ENCODE measurements at regions of chr6 and their contacts with region 1.

Region 1: GRCh38 chr6:30742316-30743098 is at the start of gene FLOT1:
- DNase-seq: peak in 1 of 2 donors; percentile 98
- H3K4me3 ChIP-seq: peak within 1 kb of the TSS; percentile 65 to 89
- H3K27ac ChIP-seq: peak within 1 kb of the TSS; percentile 95
- H3K4me1 ChIP-seq: peaks cover 57% of the 10 kb centered on the region
- H3K27me3 ChIP-seq: no peaks in the 10 kb centered on the region
- CTCF ChIP-seq: no peak
- POLR2A ChIP-seq: peak in 1 of 2 donors; percentile 61
- total RNA-seq, gene FLOT1: 165 TPM

Region 2: GRCh38 chr6:29016559-29017427 is 1725.7 kb before region 1 on chr6:
- intact Hi-C with region 1: no loop called
- DNase-seq: no peak
- H3K4me3 ChIP-seq: peak overlapping the region; percentile 50 to 63
- H3K27ac ChIP-seq: peak overlapping the region; percentile 57
- H3K4me1 ChIP-seq: peaks cover 9% of the 10 kb centered on the region
- H3K27me3 ChIP-seq: no peaks in the 10 kb centered on the region
- CTCF ChIP-seq: peak; percentile 72 to 89 (median 86)
- POLR2A ChIP-seq: no peak

Region 3: GRCh38 chr6:30781743-30782424 is 39.4 kb after region 1 on chr6:
- intact Hi-C with region 1: loop called (anchors 5 kb)
- DNase-seq: peak in 1 of 2 donors; percentile 98
- H3K4me3 ChIP-seq: peak overlapping the region in 1 of 2 donors; percentile 21
- H3K27ac ChIP-seq: peak overlapping the region; percentile 89
- H3K4me1 ChIP-seq: peaks cover 48% of the 10 kb centered on the region
- H3K27me3 ChIP-seq: no peaks in the 10 kb centered on the region
- CTCF ChIP-seq: no peak
- POLR2A ChIP-seq: no peak